ENCODE measurements at regions of chr7 and their contacts with region 1.

Region 1: DNA sequence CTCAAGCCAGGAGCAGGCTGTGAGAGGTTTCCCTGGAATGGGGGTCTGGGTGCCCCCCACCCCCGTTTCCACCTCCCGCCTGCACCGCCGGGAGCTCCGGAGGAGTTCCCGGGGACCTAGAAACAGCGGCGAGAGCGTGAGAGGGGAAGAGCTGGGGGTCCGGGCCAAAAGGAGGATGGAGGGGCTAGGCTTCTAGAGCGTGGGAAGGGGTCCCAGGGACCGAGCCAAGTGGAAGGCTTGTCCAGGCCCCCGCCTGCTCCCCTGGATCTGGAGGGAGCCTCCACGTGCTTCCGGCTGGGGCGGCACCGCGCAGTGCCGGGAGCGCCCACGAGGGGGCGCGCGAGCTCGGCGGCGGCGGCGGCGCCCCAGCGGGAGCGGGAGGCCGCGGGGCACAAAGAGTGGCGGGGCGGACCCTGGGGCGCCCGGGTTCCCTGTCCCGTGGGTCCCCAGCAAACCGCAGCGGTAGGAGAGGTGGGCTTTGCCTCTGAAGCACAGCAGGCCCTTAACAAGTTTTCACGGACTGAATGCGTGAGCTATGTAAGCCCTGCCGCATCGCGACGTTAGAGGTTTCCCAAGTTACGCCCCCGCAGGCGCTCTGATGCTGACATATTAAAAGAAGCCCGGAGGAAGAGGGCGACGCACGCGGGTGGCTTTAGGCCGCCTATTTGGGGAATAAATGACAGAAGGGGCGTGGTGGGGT is 104.4 kb upstream of the LRRC4 start:
- DNase-seq: peak; percentile 98
- H3K4me3 ChIP-seq: peak overlapping the region; percentile 60 to 77
- H3K27ac ChIP-seq: no peak overlapping the region; a peak in 1 of 4 replicates
- H3K4me1 ChIP-seq: peaks cover 4 to 10% of the 10 kb centered on the region in 2 experiments; a peak in 2 of 4 replicates
- H3K27me3 ChIP-seq: 0 out of 2 replicates have a peak, but pooled peaks cover 9% of the 10 kb centered on the region
- CTCF ChIP-seq: peak; percentile 85
- EP300 ChIP-seq: peak in 1 of 2 experiments; percentile 74; a peak in 1 of 4 replicates
- RAD21 ChIP-seq: peak; percentile 60

Region 2: DNA sequence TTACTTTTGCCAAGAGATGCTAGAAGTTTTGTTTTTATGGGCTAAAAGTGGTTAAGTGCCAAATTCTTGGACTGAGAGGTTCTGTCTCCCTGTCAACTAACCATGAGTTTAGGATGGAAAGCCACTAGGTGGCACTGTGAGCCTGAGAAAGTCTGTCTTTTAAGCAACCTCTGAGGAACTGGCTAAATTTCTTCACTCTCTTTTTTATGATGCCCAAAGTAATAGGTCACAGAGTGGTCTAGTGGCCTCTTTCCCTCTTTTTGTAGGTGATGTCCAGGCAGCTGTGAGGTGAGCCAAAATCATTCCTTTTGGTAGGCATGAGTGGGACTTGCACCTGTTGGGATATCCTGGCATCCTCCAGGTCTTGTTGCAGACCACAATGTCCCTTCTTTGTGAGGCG is 426.9 kb before region 1 on chr7:
- CTCF ChIA-PET with region 1: interaction called, 45 read pairs
- POLR2A ChIA-PET with region 1: no interaction called
- DNase-seq: peak; percentile 61
- H3K4me3 ChIP-seq: no peak overlapping the region
- H3K27ac ChIP-seq: peak overlapping the region in 1 of 2 experiments; percentile 82; a peak in 3 of 4 replicates
- H3K4me1 ChIP-seq: peaks cover 10 to 17% of the 10 kb centered on the region in 2 experiments
- H3K27me3 ChIP-seq: no peaks in the 10 kb centered on the region
- CTCF ChIP-seq: peak; percentile 96
- EP300 ChIP-seq: no peak
- RAD21 ChIP-seq: peak; percentile 99

Region 3: DNA sequence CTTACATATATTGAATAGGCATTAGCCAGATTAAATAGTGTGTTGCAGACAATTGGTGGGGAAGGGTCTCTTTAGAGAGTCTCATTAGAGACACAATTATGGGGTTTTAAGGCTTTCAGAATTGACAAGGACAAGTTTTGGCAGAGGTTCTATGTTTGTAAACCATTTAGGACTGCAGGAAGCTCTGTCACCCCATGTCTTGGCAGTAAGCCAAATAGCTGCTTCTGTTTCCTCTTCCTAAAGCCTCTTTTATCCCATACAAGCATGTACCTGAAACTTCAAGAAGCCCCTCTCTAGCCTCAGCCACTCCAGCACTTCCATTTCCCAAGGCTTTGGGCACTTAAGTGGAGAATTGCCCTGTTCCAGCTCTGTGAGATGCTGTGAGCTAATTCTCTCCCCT is 82.6 kb before region 1 on chr7:
- CTCF ChIA-PET with region 1: interaction called, 14 read pairs
- POLR2A ChIA-PET with region 1: no interaction called
- DNase-seq: peak; percentile 56
- H3K4me3 ChIP-seq: no peak overlapping the region
- H3K27ac ChIP-seq: peak overlapping the region in 1 of 2 experiments; percentile 19; a peak in 1 of 4 replicates
- H3K4me1 ChIP-seq: peaks cover 6 to 50% of the 10 kb centered on the region in 2 experiments; a peak in 3 of 4 replicates
- H3K27me3 ChIP-seq: no peaks in the 10 kb centered on the region
- CTCF ChIP-seq: no peak
- EP300 ChIP-seq: peak in 1 of 2 experiments; percentile 41; a peak in 1 of 4 replicates
- RAD21 ChIP-seq: no peak

Region 4: GRCh38 chr7:128099204-128099671 is 36.4 kb before region 1 on chr7:
- CTCF ChIA-PET with region 1: interaction called, 33 read pairs
- POLR2A ChIA-PET with region 1: no interaction called
- DNase-seq: no peak
- H3K4me3 ChIP-seq: no peak overlapping the region
- H3K27ac ChIP-seq: no peak overlapping the region
- H3K4me1 ChIP-seq: peaks cover 0 to 40% of the 10 kb centered on the region in 2 experiments; a peak in 2 of 4 replicates
- H3K27me3 ChIP-seq: no peaks in the 10 kb centered on the region
- CTCF ChIP-seq: no peak
- EP300 ChIP-seq: no peak
- RAD21 ChIP-seq: no peak

Region 5: GRCh38 chr7:128121711-128122530 is 13.7 kb before region 1 on chr7:
- CTCF ChIA-PET with region 1: interaction called, 55 read pairs
- POLR2A ChIA-PET with region 1: interaction called, 5 read pairs
- DNase-seq: no peak
- H3K4me3 ChIP-seq: no peak overlapping the region
- H3K27ac ChIP-seq: no peak overlapping the region
- H3K4me1 ChIP-seq: peaks cover 0 to 34% of the 10 kb centered on the region in 2 experiments; a peak in 1 of 4 replicates
- H3K27me3 ChIP-seq: peaks cover 21% of the 10 kb centered on the region
- CTCF ChIP-seq: no peak
- EP300 ChIP-seq: no peak
- RAD21 ChIP-seq: no peak

Region 6: GRCh38 chr7:128161466-128162125 is 25.9 kb after region 1 on chr7:
- CTCF ChIA-PET with region 1: interaction called, 53 read pairs
- POLR2A ChIA-PET with region 1: no interaction called
- DNase-seq: no peak
- H3K4me3 ChIP-seq: no peak overlapping the region
- H3K27ac ChIP-seq: no peak overlapping the region
- H3K4me1 ChIP-seq: peaks cover 2 to 6% of the 10 kb centered on the region in 2 experiments; a peak in 2 of 4 replicates
- H3K27me3 ChIP-seq: no peaks in the 10 kb centered on the region; the same call in 1 of the 2 replicates
- CTCF ChIP-seq: no peak
- EP300 ChIP-seq: no peak
- RAD21 ChIP-seq: no peak

Region 7: GRCh38 chr7:128201051-128201689 is 65.5 kb after region 1 on chr7:
- CTCF ChIA-PET with region 1: interaction called, 162 read pairs
- POLR2A ChIA-PET with region 1: no interaction called
- DNase-seq: peak; percentile 93
- H3K4me3 ChIP-seq: peak overlapping the region in 1 of 2 experiments; percentile 10; a peak in 1 of 4 replicates
- H3K27ac ChIP-seq: no peak overlapping the region
- H3K4me1 ChIP-seq: peaks cover 0 to 8% of the 10 kb centered on the region in 2 experiments; a peak in 1 of 4 replicates
- H3K27me3 ChIP-seq: peaks cover 25% of the 10 kb centered on the region
- CTCF ChIP-seq: no peak
- EP300 ChIP-seq: no peak
- RAD21 ChIP-seq: no peak

Region 8: DNA sequence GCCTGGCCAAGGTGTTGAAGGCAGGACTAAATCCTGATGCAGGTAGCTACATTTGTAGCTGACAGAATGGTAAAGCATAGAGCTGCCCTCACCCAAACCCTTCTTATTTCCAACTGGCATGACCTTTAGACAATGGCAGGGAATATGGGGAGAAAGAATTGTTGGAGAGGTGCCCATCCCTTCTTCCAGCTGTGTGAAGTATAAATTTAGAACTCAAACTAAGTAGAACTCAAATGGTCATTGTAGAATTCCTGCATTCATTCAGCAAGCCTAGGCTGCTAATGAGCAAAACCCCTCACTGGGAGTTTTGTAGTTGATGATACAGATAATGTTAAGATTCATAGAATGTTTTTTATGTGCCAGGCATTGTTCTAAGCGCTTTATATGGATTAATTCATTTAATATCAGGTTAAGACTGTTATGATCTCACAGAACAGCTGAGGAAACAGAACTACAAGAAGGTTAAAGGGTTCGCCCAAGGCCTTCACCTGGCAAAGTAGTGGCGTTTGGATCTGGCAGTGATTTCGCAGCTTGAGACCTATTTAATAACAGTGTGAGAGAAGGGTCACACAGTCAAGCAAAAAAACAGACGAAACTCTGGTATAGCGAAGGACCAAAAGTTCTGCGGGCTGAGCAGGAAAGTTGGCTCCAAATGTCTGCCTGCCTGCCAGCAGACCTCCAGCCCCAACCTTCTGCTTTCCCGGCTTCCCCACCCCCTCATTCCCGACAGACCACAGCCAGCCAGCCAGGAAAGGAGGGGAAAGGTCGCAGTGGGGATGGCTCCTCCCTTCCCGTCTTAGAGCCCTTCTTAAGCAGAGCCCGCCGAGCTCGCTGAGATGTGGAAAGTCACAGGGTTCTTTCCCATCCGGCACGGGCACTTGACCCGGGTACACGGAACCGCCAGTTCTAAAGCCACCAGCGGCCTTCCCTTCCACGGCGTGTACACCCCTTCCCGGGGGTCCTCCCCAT is 318.5 kb after region 1 on chr7:
- CTCF ChIA-PET with region 1: no interaction called
- POLR2A ChIA-PET with region 1: no interaction called
- DNase-seq: peak; percentile 75
- H3K4me3 ChIP-seq: no peak overlapping the region
- H3K27ac ChIP-seq: peak overlapping the region in 1 of 2 experiments; percentile 91; a peak in 2 of 4 replicates
- H3K4me1 ChIP-seq: peaks cover 25 to 33% of the 10 kb centered on the region in 2 experiments; a peak in 3 of 4 replicates
- H3K27me3 ChIP-seq: no peaks in the 10 kb centered on the region
- CTCF ChIP-seq: no peak
- EP300 ChIP-seq: peak in 1 of 2 experiments; percentile 66; a peak in 1 of 4 replicates
- RAD21 ChIP-seq: no peak